CD4-positive, alpha-beta memory T cell (primary cell): ENCODE measurements at regions of chr11 and their contacts with region 1.

Region 1: DNA sequence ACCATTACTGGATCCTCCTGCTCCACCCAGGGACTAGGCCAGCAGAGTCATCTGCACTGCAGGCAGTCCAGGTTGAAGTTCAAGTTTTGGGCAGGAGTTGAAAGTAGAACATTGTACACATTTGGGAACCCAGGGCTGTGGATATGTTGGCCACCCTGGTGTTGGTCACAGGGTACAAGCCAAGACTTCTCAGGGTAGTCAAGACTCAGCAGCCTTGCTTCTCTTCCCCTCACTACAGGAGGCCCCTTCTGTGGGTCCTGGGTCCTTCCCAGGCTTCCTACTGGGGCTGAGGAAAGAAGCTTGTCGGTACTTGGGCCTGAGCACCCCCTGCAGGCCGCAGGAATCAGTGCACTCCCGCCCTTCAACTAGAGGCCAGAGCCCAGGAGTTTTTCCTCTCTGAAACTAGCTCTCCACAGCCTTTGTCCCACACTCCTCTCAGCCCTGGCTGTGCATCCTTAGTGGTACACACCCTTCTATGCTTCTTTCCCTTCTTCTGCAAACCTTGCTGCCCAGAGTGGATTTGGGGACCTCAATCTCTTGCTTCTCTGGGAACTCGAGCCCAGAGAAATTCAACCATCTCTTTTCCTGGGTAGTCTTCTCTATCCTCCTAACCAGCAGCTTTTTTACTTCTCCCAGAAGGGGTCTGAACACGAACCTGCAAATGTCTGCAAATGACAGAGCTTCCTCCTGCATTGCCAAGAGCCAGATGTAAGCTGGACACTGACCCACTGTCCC is 2.6 kb upstream of the HPX start:
- DNase-seq: peak; percentile 53 to 58 (median 57)
- H3K4me3 ChIP-seq: no peak overlapping the region
- H3K4me3 Mint-ChIP-seq: no peak overlapping the region
- H3K27ac ChIP-seq: no peak overlapping the region
- H3K27ac Mint-ChIP-seq: no peak overlapping the region
- H3K4me1 ChIP-seq: peaks cover 18% of the 10 kb centered on the region
- H3K4me1 Mint-ChIP-seq: no peaks in the 10 kb centered on the region
- H3K27me3 ChIP-seq: no peaks in the 10 kb centered on the region
- H3K27me3 Mint-ChIP-seq: no peaks in the 10 kb centered on the region

Region 2: DNA sequence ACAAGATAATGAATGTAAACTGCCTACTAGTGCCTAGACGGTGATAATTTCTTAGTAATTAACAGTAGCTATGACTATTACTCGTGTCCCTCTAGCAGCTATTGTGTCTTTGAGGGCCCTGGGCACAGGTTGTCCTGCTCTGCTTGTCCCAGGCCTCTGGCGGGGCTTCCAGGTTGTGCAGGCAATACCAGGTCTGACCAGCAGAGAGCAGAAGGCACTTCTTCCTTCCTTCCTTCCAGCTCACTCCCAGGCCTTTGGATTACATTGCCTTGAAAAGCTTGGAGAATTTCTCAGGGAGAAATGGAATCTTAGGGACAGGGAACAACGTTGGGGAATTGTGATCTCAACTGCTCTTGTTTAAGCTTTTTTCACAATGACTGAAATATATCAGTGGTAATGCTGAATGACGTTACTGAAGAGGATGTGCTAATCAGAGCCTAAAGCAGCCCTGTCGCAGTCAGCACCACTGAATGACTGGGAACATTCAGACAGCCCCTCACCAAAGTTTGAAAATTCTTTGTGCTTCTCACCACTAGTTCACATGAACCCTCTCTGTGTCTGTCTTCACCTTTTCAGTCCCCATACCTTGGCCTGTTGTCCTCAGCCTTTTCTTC is 192.2 kb before region 1 on chr11:
- CTCF ChIA-PET with region 1: interaction called, 4 read pairs
- POLR2A ChIA-PET with region 1: no interaction called
- intact Hi-C with region 1: loop called (anchors 10 kb)
- DNase-seq: peak in 4 of 5 donors; percentile 26 to 35 (median 31)
- H3K4me3 ChIP-seq: no peak overlapping the region
- H3K4me3 Mint-ChIP-seq: no peak overlapping the region
- H3K27ac ChIP-seq: no peak overlapping the region
- H3K27ac Mint-ChIP-seq: no peak overlapping the region
- H3K4me1 ChIP-seq: no peaks in the 10 kb centered on the region
- H3K4me1 Mint-ChIP-seq: no peaks in the 10 kb centered on the region
- H3K27me3 ChIP-seq: no peaks in the 10 kb centered on the region
- H3K27me3 Mint-ChIP-seq: peaks cover 0 to 1% of the 10 kb centered on the region in 2 donors

Region 3: DNA sequence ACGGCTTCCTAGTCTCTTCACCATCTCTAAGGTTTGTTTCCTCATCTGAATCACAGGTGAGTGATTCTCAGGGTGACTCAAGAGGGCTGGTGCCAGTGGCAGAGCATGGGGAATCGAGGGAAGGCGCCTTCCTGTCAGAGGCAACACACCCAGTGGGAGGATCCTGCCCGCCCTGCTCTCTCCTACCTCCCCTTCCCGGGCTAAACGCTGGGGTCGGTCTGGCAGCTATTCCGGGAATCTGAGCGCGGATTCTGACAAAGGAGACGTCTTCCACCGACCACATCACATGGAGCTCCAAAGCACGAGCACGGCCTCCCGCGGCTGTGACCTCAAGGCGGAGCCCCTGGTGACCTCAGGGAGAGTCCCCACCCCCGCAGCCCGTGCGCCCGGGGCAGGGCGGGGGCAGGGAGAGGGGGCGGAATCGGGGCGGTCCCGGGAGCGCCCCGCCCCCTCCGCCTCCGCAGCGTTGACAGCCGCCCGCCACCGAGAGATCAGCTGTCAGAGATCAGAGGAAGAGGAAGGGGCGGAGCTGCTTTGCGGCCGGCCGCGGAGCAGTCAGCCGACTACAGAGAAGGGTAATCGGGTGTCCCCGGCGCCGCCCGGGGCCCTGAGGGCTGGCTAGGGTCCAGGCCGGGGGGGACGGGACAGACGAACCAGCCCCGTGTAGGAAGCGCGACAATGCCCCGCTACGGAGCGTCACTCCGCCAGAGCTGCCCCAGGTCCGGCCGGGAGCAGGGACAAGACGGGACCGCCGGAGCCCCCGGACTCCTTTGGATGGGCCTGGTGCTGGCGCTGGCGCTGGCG is 53.3 kb before region 1 on chr11 and contains the start of gene SMPD1:
- CTCF ChIA-PET with region 1: interaction called, 1,014 read pairs
- POLR2A ChIA-PET with region 1: interaction called, 8 read pairs
- intact Hi-C with region 1: no loop called
- DNase-seq: peak; percentile 91 to 96 (median 92)
- H3K4me3 ChIP-seq: peak within 1 kb of the TSS; percentile 79 to 97
- H3K4me3 Mint-ChIP-seq: peak within 1 kb of the TSS; percentile 93 to 98 (median 95)
- H3K27ac ChIP-seq: peak within 1 kb of the TSS; percentile 83
- H3K27ac Mint-ChIP-seq: peak within 1 kb of the TSS; percentile 98 to 100 (median 99)
- H3K4me1 ChIP-seq: peaks cover 50% of the 10 kb centered on the region
- H3K4me1 Mint-ChIP-seq: peaks cover 24 to 61% (median 44%) of the 10 kb centered on the region in 4 donors
- H3K27me3 ChIP-seq: no peaks in the 10 kb centered on the region
- H3K27me3 Mint-ChIP-seq: no peaks in the 10 kb centered on the region
- total RNA-seq, gene SMPD1: 39.3 to 43.6 TPM

Region 4: DNA sequence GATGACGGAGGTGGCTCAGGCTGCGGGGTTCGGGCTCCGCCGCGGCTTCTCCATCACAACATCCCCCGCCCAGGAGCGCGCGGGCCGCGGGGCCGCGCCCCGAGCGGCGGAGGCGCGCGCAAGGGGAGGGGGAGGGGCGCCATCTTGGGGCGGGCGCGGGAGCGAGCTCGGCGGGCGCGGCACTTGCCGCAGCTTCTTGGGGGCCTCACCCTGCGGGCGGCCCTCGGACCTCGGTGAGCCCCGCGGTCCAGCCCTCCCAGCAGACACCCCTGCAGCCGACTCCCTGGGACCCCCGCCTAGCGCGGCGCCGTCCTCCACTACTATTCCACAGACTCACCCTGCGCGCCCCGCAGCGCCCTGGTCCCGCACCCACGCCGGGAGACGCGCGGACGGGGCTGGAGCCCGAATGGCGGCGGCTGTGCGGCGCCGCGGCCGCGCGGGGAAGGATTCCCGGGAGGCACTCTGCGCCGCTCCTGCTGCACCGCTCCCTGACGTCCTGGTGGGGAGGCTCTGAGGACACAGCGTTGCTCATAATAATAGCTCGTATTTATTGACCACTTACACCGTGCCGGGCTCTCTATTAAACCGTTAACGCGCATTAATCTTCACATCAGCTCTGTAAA is 24.3 kb before region 1 on chr11 and contains the start of gene APBB1:
- CTCF ChIA-PET with region 1: interaction called, 31 read pairs
- POLR2A ChIA-PET with region 1: interaction called, 8 read pairs
- intact Hi-C with region 1: loop called (anchors 2 kb)
- DNase-seq: peak; percentile 67 to 81 (median 79)
- H3K4me3 ChIP-seq: peak within 1 kb of the TSS; percentile 43 to 74
- H3K4me3 Mint-ChIP-seq: peak within 1 kb of the TSS in 6 of 8 donors; percentile 81 to 89 (median 86)
- H3K27ac ChIP-seq: peak within 1 kb of the TSS; percentile 73
- H3K27ac Mint-ChIP-seq: peak within 1 kb of the TSS; percentile 74 to 90 (median 84)
- H3K4me1 ChIP-seq: peaks cover 50% of the 10 kb centered on the region
- H3K4me1 Mint-ChIP-seq: peaks cover 5 to 12% (median 8%) of the 10 kb centered on the region in 4 donors
- H3K27me3 ChIP-seq: no peaks in the 10 kb centered on the region
- H3K27me3 Mint-ChIP-seq: peaks cover 6 to 15% of the 10 kb centered on the region in 2 donors
- total RNA-seq, gene APBB1: 93.2 to 93.5 TPM

Region 5: GRCh38 chr11:6458352-6459098 is 15.1 kb after region 1 on chr11:
- CTCF ChIA-PET with region 1: interaction called, 49 read pairs
- POLR2A ChIA-PET with region 1: no interaction called
- intact Hi-C with region 1: no loop called
- DNase-seq: no peak
- H3K4me3 ChIP-seq: no peak overlapping the region
- H3K4me3 Mint-ChIP-seq: no peak overlapping the region
- H3K27ac ChIP-seq: no peak overlapping the region
- H3K27ac Mint-ChIP-seq: peak overlapping the region in 2 of 7 donors; percentile 24 to 33
- H3K4me1 ChIP-seq: no peaks in the 10 kb centered on the region
- H3K4me1 Mint-ChIP-seq: no peaks in the 10 kb centered on the region
- H3K27me3 ChIP-seq: no peaks in the 10 kb centered on the region
- H3K27me3 Mint-ChIP-seq: no peaks in the 10 kb centered on the region

Region 6: DNA sequence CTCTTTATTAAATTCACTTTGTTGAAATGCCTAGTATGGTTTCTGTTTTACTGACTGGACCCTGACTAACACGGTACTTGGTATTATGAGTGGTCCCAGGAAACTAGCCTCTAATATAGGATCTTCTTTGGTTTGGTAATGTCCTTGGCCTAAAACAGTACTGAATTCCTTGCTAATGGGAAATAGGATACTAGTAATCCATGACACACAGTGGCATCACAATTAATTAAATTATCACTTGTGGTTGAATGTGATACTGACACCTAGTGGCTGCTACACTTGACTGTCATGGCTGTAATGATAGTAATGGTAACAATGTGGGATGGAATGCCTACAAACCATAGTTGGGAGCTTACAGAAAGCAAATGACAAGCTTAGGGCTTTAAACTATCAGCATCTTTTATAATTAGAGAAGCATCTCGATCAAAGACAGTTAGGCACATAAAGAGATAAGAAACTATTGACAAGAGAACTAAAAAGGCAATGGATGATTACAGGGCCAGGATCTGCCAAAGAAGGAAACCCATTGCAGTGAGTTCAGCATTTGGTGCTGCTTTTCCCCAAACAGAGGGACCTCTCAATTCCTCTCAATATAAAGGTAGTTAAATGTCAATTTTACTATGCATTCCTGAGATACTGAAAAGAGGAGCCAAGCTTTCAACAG is 62.3 kb after region 1 on chr11:
- CTCF ChIA-PET with region 1: interaction called, 37 read pairs
- POLR2A ChIA-PET with region 1: no interaction called
- intact Hi-C with region 1: loop called (anchors 1 kb)
- DNase-seq: peak; percentile 17 to 41 (median 27)
- H3K4me3 ChIP-seq: no peak overlapping the region
- H3K4me3 Mint-ChIP-seq: no peak overlapping the region
- H3K27ac ChIP-seq: no peak overlapping the region
- H3K27ac Mint-ChIP-seq: no peak overlapping the region
- H3K4me1 ChIP-seq: no peaks in the 10 kb centered on the region
- H3K4me1 Mint-ChIP-seq: peaks cover 0 to 5% (median 0%) of the 10 kb centered on the region in 4 donors
- H3K27me3 ChIP-seq: no peaks in the 10 kb centered on the region
- H3K27me3 Mint-ChIP-seq: no peaks in the 10 kb centered on the region